Naive thymus-derived CD4-positive, alpha-beta T cell (primary cell): ENCODE measurements at regions of chr12 and their contacts with region 1.

Region 1: GRCh38 chr12:113184900-113185773 is at the starts of genes DDX54 and RITA1:
- DNase-seq: peak; percentile 85 to 95 (median 91)
- ATAC-seq: peak; percentile 88
- H3K4me3 ChIP-seq: peak within 1 kb of the TSS; percentile 77
- H3K4me3 Mint-ChIP-seq: peak within 1 kb of the TSS; percentile 92 to 99 (median 96)
- H3K27ac ChIP-seq: peak within 1 kb of the TSS; percentile 96
- H3K27ac Mint-ChIP-seq: peak within 1 kb of the TSS; percentile 91 to 98 (median 97)
- H3K4me1 ChIP-seq: peaks cover 20 to 32% of the 10 kb centered on the region in 2 donors
- H3K4me1 Mint-ChIP-seq: peaks cover 20 to 55% (median 33%) of the 10 kb centered on the region in 7 donors
- H3K27me3 ChIP-seq: no peaks in the 10 kb centered on the region
- H3K27me3 Mint-ChIP-seq: no peaks in the 10 kb centered on the region
- total RNA-seq, gene DDX54: 55.8 to 81.1 (median 76.7) TPM
- total RNA-seq, gene RITA1: 6.4 to 20.2 (median 14.1) TPM

Region 2: DNA sequence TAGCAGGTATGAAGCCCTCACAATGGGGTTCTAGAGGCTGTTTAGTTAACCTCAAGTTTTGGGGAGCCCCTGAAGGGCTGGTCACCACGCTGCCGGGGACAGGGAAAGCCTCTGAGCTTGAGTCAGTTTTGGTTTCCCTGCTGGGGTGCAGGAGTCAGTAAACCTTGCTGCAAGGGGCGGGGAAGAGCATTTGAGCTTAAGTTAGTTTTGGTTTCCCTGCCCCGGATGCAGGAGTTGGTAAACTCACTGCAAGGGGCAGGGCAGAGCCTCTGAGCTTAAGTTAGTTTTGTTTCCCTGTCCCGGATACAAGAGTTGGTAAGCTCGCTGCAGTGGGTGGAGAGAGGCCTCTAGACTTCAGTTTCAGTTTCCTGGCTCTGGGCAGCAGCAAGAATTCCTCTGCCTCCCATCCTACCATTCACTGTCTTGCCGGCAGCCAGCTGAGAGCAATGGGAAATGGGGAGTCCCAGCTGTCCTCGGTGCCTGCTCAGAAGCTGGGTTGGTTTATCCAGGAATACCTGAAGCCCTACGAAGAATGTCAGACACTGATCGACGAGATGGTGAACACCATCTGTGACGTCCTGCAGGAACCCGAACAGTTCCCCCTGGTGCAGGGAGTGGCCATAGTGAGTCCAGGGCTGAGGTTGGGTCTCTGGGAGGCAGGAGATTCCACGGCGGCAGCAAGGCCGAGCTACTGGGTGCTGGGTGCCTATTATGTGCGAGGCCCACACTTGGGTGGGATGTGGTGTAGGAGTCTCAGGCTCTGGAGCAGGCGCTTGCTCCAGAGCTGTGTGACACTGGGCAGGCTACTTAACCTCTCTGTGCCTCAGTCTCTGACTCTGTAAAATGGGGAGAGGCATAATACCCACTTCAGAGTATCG is 206.7 kb before region 1 on chr12 and contains the start of gene OAS2:
- CTCF ChIA-PET with region 1: no interaction called
- POLR2A ChIA-PET with region 1: interaction called, 5 read pairs
- intact Hi-C with region 1: loop called in 1 of 2 experiments (anchors 1 kb)
- DNase-seq: peak; percentile 35 to 89 (median 85)
- ATAC-seq: peak; percentile 97
- H3K4me3 ChIP-seq: peak within 1 kb of the TSS; percentile 99
- H3K4me3 Mint-ChIP-seq: peak within 1 kb of the TSS; percentile 87 to 100 (median 96)
- H3K27ac ChIP-seq: peak within 1 kb of the TSS; percentile 89
- H3K27ac Mint-ChIP-seq: peak within 1 kb of the TSS; percentile 97 to 100 (median 99)
- H3K4me1 ChIP-seq: peaks cover 34 to 37% of the 10 kb centered on the region in 2 donors
- H3K4me1 Mint-ChIP-seq: peaks cover 30 to 59% (median 42%) of the 10 kb centered on the region in 7 donors
- H3K27me3 ChIP-seq: no peaks in the 10 kb centered on the region
- H3K27me3 Mint-ChIP-seq: no peaks in the 10 kb centered on the region
- total RNA-seq, gene OAS2: 29.9 to 238 (median 66.0) TPM

Region 3: DNA sequence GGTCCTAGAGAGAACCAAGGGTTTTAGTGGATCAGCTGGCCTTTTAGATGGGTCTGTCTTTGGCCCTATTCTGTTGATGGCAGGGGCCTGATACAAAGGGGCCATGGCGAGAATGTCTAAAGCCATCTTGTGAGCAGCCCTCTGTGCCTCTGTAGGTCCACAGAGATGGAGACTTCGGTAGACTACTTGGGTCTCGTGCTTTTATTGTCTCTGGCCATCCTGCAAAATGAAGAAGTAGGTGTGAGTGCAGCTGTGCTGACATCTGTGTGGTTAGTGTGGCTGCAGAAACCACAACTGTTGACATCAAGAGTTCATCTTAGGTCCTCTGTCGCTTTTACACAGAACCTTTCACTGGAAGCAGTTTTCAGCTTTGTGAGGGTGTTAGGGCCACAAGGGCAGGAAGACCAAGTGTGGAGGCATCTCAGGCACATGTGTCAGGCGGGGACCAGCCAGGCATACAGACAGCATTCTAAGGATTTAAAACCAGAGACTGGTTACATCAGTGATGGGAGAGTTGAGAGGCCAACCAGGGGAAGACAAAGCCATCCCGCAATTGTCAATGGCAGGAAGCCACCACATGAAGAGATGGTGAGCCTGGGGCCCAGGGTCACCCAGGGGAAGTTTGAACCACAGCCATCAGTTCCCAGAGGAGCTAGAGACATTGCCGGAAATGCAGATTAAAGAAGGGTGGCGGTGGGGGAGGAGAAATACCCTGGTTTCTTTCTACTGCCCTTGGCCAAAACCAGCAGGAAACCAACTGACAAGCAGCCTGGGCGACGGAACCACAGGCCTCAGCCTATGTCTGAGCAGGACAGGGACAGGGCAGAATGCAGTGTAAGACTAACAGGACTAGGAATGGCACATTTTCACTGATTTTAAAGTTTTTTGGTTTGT is 23.2 kb after region 1 on chr12:
- CTCF ChIA-PET with region 1: no interaction called
- POLR2A ChIA-PET with region 1: interaction called, 8 read pairs
- intact Hi-C with region 1: loop called (anchors 1 to 2 kb)
- DNase-seq: peak; percentile 18 to 72 (median 62)
- ATAC-seq: peak; percentile 89
- H3K4me3 ChIP-seq: no peak overlapping the region
- H3K4me3 Mint-ChIP-seq: peak overlapping the region; percentile 59 to 86 (median 77)
- H3K27ac ChIP-seq: peak overlapping the region; percentile 64
- H3K27ac Mint-ChIP-seq: peak overlapping the region; percentile 82 to 97 (median 90)
- H3K4me1 ChIP-seq: peaks cover 38 to 45% of the 10 kb centered on the region in 2 donors
- H3K4me1 Mint-ChIP-seq: peaks cover 28 to 62% (median 51%) of the 10 kb centered on the region in 7 donors
- H3K27me3 ChIP-seq: no peaks in the 10 kb centered on the region
- H3K27me3 Mint-ChIP-seq: no peaks in the 10 kb centered on the region

Region 4: DNA sequence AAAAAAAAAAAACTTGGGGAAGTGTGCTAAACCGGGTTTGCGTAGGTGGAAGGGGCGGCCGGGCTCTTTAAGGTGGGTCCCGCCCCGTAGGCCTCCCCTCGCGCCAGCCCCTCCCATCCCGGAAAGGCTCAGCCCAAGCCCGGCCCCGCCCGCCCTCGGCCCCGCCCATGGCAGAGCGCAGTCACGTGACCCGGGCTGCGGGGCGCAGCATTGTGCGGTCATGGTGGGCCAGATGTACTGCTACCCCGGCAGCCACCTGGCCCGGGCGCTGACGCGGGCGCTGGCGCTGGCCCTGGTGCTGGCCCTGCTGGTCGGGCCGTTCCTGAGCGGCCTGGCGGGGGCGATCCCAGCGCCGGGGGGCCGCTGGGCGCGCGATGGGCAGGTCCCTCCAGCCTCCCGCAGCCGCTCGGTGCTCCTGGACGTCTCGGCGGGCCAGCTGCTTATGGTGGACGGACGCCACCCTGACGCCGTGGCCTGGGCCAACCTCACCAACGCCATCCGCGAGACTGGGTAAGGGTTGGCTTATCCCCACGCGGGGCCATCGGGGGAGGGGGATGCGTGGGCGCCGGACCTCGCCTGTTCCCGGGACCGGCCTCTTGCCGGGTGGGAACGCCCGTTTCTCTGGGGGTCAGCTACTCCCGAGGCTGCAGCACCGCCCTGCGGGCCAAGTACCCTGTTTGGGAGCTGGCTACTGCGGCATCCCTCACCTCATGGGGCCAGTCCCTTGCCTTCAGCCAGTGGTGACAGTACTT is 173.4 kb after region 1 on chr12 and contains the start of gene PLBD2:
- CTCF ChIA-PET with region 1: no interaction called
- POLR2A ChIA-PET with region 1: interaction called, 3 read pairs
- intact Hi-C with region 1: loop called (anchors 1 kb)
- DNase-seq: peak; percentile 85 to 95 (median 92)
- ATAC-seq: peak; percentile 98
- H3K4me3 ChIP-seq: peak within 1 kb of the TSS; percentile 82
- H3K4me3 Mint-ChIP-seq: peak within 1 kb of the TSS; percentile 83 to 94 (median 91)
- H3K27ac ChIP-seq: peak within 1 kb of the TSS; percentile 85
- H3K27ac Mint-ChIP-seq: peak within 1 kb of the TSS; percentile 79 to 98 (median 95)
- H3K4me1 ChIP-seq: peaks cover 0 to 5% of the 10 kb centered on the region in 2 donors
- H3K4me1 Mint-ChIP-seq: peaks cover 13 to 25% (median 17%) of the 10 kb centered on the region in 7 donors
- H3K27me3 ChIP-seq: no peaks in the 10 kb centered on the region
- H3K27me3 Mint-ChIP-seq: peaks cover 0 to 3% (median 0%) of the 10 kb centered on the region in 5 donors
- total RNA-seq, gene PLBD2: 13.2 to 25.4 (median 14.9) TPM